ENCODE measurements at regions of chr7 and their contacts with region 1.

Region 1: GRCh38 chr7:21427182-21427870 is 557 bp upstream of the SP4 start:
- DNase-seq: peak; percentile 99 to 100
- H3K4me3 ChIP-seq: peak overlapping the region; percentile 80
- H3K4me3 Mint-ChIP-seq: peak overlapping the region; percentile 98
- H3K27ac Mint-ChIP-seq: peak overlapping the region; percentile 99
- H3K4me1 ChIP-seq: peaks cover 6% of the 10 kb centered on the region; the same call in 1 of the 2 replicates
- H3K4me1 Mint-ChIP-seq: peaks cover 16% of the 10 kb centered on the region
- H3K27me3 ChIP-seq: no peaks in the 10 kb centered on the region
- H3K27me3 Mint-ChIP-seq: no peaks in the 10 kb centered on the region
- CTCF ChIP-seq: no peak

Region 2: GRCh38 chr7:20786779-20787659 is 640.3 kb before region 1 on chr7 and contains the start of gene SP8:
- CTCF ChIA-PET with region 1: no interaction called
- POLR2A ChIA-PET with region 1: no interaction called
- intact Hi-C with region 1: loop called (anchors 5 kb)
- DNase-seq: peak; percentile 86 to 90
- H3K4me3 ChIP-seq: peak within 1 kb of the TSS; percentile 84
- H3K4me3 Mint-ChIP-seq: peak within 1 kb of the TSS; percentile 92
- H3K27ac Mint-ChIP-seq: peak within 1 kb of the TSS; percentile 66
- H3K4me1 ChIP-seq: peaks cover 10% of the 10 kb centered on the region
- H3K4me1 Mint-ChIP-seq: peaks cover 29% of the 10 kb centered on the region
- H3K27me3 ChIP-seq: no peaks in the 10 kb centered on the region; the same call in 1 of the 2 replicates
- H3K27me3 Mint-ChIP-seq: peaks cover 6% of the 10 kb centered on the region
- CTCF ChIP-seq: no peak
- total RNA-seq, gene SP8: 13.2 and 13.3 TPM in 2 replicates

Region 3: DNA sequence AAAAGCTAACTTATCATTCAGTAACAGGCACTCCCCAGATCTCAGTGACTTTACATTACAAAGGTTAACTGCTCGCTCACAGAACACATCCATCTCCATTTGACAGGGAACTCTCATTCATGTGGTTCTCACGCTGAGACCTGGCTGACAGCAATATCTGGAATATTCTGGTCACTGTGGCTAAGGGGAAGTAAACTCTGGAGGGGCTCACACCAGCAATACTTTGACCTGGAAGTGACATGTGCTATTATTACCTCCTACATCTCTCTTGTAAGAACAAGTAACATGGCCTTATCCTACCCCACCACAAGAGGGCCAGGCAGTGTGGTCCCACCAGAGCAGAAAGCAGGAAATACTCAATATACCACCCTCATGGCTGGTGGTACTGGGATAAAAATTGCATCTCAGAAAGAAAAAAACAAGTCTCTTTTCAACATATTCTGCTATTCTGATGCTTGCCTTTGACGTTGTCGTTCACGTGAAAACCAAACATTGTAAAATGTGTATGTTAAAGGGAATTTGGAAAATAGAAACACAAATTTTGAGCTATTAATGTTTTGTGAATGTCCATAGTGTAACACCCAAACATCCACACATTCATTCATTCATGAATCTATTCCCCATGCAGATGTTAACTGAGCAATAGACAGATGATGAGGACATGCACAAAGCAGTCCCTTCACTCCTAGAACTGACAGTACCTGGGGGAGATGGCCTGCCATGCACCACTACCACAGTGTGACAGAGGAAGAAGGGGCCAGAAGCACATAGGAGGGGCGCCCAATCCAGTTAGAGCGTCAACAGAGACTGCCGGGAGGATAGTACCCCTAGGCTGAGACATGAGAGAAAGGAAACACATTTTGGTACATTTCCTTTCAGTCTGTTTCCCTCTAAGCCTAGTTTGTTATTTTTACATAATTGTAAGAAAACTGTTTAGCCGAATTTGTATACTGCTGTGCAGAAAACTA is 165.4 kb before region 1 on chr7:
- CTCF ChIA-PET with region 1: interaction called, 3 read pairs
- POLR2A ChIA-PET with region 1: interaction called, 5 read pairs
- intact Hi-C with region 1: loop called (anchors 2 kb)
- DNase-seq: peak; percentile 67 to 71
- H3K4me3 ChIP-seq: no peak overlapping the region
- H3K4me3 Mint-ChIP-seq: no peak overlapping the region
- H3K27ac Mint-ChIP-seq: no peak overlapping the region
- H3K4me1 ChIP-seq: no peaks in the 10 kb centered on the region
- H3K4me1 Mint-ChIP-seq: no peaks in the 10 kb centered on the region
- H3K27me3 ChIP-seq: no peaks in the 10 kb centered on the region
- H3K27me3 Mint-ChIP-seq: no peaks in the 10 kb centered on the region
- CTCF ChIP-seq: peak; percentile 78 to 84

Region 4: GRCh38 chr7:21365866-21366624 is 61.3 kb before region 1 on chr7:
- CTCF ChIA-PET with region 1: no interaction called
- POLR2A ChIA-PET with region 1: interaction called, 15 read pairs
- intact Hi-C with region 1: loop called (anchors 1 kb)
- DNase-seq: peak; percentile 52 to 77
- H3K4me3 ChIP-seq: no peak overlapping the region
- H3K4me3 Mint-ChIP-seq: peak overlapping the region; percentile 14
- H3K27ac Mint-ChIP-seq: peak overlapping the region; percentile 65
- H3K4me1 ChIP-seq: peaks cover 48% of the 10 kb centered on the region
- H3K4me1 Mint-ChIP-seq: peaks cover 34% of the 10 kb centered on the region
- H3K27me3 ChIP-seq: no peaks in the 10 kb centered on the region
- H3K27me3 Mint-ChIP-seq: no peaks in the 10 kb centered on the region
- CTCF ChIP-seq: no peak

Region 5: DNA sequence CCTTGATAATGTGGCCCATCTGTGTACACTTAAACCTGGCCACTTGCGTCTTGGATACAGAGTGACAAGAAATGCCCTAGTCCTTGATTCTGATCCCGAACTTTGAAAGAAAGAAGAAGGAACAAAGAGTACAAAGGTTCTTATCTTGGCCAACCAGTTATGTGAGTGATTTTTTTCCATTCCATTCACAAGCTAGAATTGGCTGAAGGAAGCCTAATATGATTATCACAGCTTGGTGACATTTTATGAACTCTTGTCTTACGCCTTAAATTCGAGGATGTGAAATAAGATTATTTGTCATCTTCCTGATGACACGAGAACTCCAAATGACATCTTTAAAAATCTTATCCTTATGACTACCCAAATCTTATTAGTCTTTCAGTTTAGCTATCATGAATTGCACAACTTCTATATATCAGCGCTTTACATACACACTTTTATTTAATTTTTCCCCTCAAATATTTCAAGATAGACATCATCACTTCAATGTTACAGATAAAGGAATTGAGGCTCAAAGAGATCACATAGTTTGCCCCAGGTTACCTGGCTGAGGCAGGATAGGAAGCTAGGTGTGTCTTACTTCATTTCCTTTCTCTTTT is 12.4 kb before region 1 on chr7:
- CTCF ChIA-PET with region 1: interaction called, 17 read pairs
- POLR2A ChIA-PET with region 1: interaction called, 3 read pairs
- intact Hi-C with region 1: no loop called
- DNase-seq: no peak
- H3K4me3 ChIP-seq: no peak overlapping the region
- H3K4me3 Mint-ChIP-seq: no peak overlapping the region
- H3K27ac Mint-ChIP-seq: no peak overlapping the region
- H3K4me1 ChIP-seq: peaks cover 21% of the 10 kb centered on the region
- H3K4me1 Mint-ChIP-seq: peaks cover 6% of the 10 kb centered on the region
- H3K27me3 ChIP-seq: no peaks in the 10 kb centered on the region
- H3K27me3 Mint-ChIP-seq: no peaks in the 10 kb centered on the region
- CTCF ChIP-seq: no peak

Region 6: DNA sequence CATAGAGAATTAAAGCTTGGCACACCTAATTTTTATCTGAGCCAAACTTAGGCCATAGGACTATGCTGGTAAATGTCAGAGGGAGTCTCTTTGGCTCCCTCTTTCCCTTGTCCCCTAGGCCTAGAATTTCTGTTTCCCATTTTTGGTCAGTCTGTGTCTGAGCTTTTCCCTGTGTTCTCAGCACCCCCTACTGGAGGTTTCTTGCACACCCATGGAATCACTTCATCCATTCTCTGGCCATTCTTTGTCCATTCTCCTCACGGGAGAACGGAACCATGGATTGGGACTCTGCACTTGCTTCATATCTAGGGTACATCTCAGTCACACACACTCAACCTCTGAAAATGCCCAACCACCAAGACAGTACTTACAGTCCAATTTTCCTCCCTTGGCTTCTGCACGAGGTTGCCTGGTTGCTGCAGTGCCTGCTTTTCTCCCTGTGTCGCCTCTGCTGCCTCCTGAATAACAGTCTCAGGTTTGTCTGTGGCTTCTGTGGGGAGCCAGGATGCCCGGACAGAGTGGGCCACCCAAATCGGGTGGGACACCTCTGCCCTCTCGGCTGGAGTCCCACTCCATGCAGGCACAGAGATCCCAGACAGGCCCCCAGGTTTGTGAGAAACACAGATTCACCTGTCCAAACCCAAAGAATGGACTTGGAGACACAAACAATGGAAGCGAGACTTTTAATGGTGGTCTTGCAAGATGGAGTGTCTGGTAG is 80.5 kb after region 1 on chr7:
- CTCF ChIA-PET with region 1: interaction called, 3 read pairs
- POLR2A ChIA-PET with region 1: no interaction called
- intact Hi-C with region 1: loop called (anchors 1 kb)
- DNase-seq: peak in 1 of 2 experiments; percentile 49
- H3K4me3 ChIP-seq: no peak overlapping the region
- H3K4me3 Mint-ChIP-seq: no peak overlapping the region
- H3K27ac Mint-ChIP-seq: no peak overlapping the region
- H3K4me1 ChIP-seq: peaks cover 17% of the 10 kb centered on the region; the same call in 1 of the 2 replicates
- H3K4me1 Mint-ChIP-seq: peaks cover 13% of the 10 kb centered on the region
- H3K27me3 ChIP-seq: no peaks in the 10 kb centered on the region
- H3K27me3 Mint-ChIP-seq: no peaks in the 10 kb centered on the region
- CTCF ChIP-seq: peak; percentile 53 to 54

Region 7: DNA sequence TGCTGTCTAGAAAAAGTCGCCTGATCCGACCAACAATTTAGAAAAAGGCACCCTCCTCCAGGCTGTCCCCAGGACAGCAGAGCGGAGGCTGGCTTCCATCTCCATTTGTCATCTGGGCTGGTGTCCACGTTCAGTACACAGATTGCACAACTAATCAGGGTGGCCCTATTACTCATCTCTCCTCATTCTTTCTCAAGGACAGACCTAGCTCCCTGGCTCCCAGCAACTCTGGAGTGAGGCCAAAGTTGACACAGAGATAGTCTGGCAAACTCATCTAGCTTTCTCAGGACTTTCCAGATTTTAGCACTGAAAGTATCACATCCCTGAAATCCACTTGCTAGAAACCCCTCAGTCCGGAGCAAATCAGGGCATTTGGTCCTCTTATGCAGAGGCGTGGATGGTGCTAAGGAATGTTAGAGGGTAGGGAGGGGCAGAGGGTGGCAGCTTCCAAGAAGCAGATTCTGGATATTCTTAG is 190.6 kb after region 1 on chr7:
- CTCF ChIA-PET with region 1: no interaction called
- POLR2A ChIA-PET with region 1: no interaction called
- intact Hi-C with region 1: loop called (anchors 2 kb)
- DNase-seq: peak; percentile 75 to 83
- H3K4me3 ChIP-seq: no peak overlapping the region
- H3K4me3 Mint-ChIP-seq: peak overlapping the region; percentile 59
- H3K27ac Mint-ChIP-seq: peak overlapping the region; percentile 94
- H3K4me1 ChIP-seq: peaks cover 40% of the 10 kb centered on the region
- H3K4me1 Mint-ChIP-seq: peaks cover 29% of the 10 kb centered on the region
- H3K27me3 ChIP-seq: no peaks in the 10 kb centered on the region
- H3K27me3 Mint-ChIP-seq: no peaks in the 10 kb centered on the region
- CTCF ChIP-seq: no peak

Measured in Caco-2 (cell line).